CD14-positive monocyte (primary cell): ENCODE measurements at regions of chr2 and their contacts with region 1.

Region 1: DNA sequence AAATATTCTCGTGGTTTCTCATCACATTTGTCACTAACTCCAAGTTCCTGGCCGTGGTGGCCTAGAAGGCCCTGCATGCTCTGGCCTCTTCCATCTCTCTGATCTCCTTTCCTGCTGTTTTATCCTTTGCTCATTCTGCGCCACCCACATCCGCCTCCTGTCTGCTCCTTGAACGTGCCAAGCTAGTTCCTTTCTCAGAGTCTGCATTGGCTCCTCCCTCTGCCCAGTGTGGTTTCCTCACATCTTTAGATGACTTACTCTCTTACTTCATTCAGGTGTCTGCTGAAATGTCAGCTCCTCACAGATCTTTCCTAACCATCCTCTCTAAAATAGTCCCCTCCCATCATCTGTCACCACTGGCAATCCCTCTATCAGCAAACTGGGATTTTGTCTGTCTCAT is 158.6 kb upstream of the RBMS1 start:
- DNase-seq: peak; percentile 81 to 94 (median 88)
- H3K4me3 ChIP-seq: peak overlapping the region in 1 of 3 experiments; percentile 28
- H3K4me3 Mint-ChIP-seq: peak overlapping the region in 1 of 2 donors; percentile 32
- H3K27ac ChIP-seq: peak overlapping the region; percentile 70 to 89
- H3K27ac Mint-ChIP-seq: peak overlapping the region; percentile 82 to 96 (median 87)
- H3K4me1 ChIP-seq: peaks cover 34 to 38% of the 10 kb centered on the region in 2 donors
- H3K4me1 Mint-ChIP-seq: peaks cover 39% of the 10 kb centered on the region
- H3K27me3 ChIP-seq: no peaks in the 10 kb centered on the region
- H3K27me3 Mint-ChIP-seq: peaks cover 0 to 4% (median 0%) of the 10 kb centered on the region in 3 donors
- CTCF ChIP-seq: no peak

Region 2: GRCh38 chr2:160566717-160567116 is 85.5 kb before region 1 on chr2:
- intact Hi-C with region 1: loop called (anchors 5 kb)
- DNase-seq: peak; percentile 80 to 94 (median 83)
- H3K4me3 ChIP-seq: peak overlapping the region in 1 of 3 experiments; percentile 43
- H3K4me3 Mint-ChIP-seq: peak overlapping the region in 1 of 2 donors; percentile 32
- H3K27ac ChIP-seq: peak overlapping the region; percentile 9 to 76
- H3K27ac Mint-ChIP-seq: peak overlapping the region; percentile 81 to 92 (median 91)
- H3K4me1 ChIP-seq: peaks cover 92 to 98% of the 10 kb centered on the region in 2 donors
- H3K4me1 Mint-ChIP-seq: peaks cover 93% of the 10 kb centered on the region
- H3K27me3 ChIP-seq: no peaks in the 10 kb centered on the region
- H3K27me3 Mint-ChIP-seq: peaks cover 0 to 1% (median 0%) of the 10 kb centered on the region in 3 donors
- CTCF ChIP-seq: no peak

Region 3: GRCh38 chr2:160574468-160575142 is 77.6 kb before region 1 on chr2:
- intact Hi-C with region 1: loop called (anchors 5 kb)
- DNase-seq: peak; percentile 50 to 81 (median 57)
- H3K4me3 ChIP-seq: no peak overlapping the region
- H3K4me3 Mint-ChIP-seq: no peak overlapping the region
- H3K27ac ChIP-seq: peak overlapping the region in 1 of 2 donors; percentile 70
- H3K27ac Mint-ChIP-seq: peak overlapping the region in 3 of 7 donors; percentile 20 to 81 (median 61)
- H3K4me1 ChIP-seq: peaks cover 44 to 56% of the 10 kb centered on the region in 2 donors
- H3K4me1 Mint-ChIP-seq: peaks cover 25% of the 10 kb centered on the region
- H3K27me3 ChIP-seq: no peaks in the 10 kb centered on the region
- H3K27me3 Mint-ChIP-seq: peaks cover 0 to 1% (median 0%) of the 10 kb centered on the region in 3 donors
- CTCF ChIP-seq: no peak

Region 4: DNA sequence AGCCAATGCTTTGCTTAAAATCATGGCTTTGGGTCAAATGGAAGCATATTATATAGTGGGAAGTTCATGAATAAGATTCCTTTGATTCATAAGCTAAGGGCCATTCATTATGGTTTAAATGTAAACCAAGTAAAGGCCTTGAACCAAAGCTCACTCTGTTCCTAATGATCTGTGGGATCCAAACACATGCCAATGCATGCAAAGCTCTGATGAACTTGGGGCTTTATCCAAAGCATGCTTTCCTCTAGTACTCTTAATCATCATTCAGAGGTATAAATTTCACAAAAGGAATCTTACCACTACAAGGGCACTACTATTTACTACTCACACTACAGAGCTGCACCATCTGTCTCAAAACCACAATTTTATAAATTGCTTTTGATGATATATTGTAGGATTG is 55.8 kb before region 1 on chr2:
- intact Hi-C with region 1: no loop called
- DNase-seq: no peak
- H3K4me3 ChIP-seq: no peak overlapping the region
- H3K4me3 Mint-ChIP-seq: no peak overlapping the region
- H3K27ac ChIP-seq: no peak overlapping the region
- H3K27ac Mint-ChIP-seq: no peak overlapping the region
- H3K4me1 ChIP-seq: peaks cover 3 to 4% of the 10 kb centered on the region in 2 donors
- H3K4me1 Mint-ChIP-seq: peaks cover 4% of the 10 kb centered on the region
- H3K27me3 ChIP-seq: no peaks in the 10 kb centered on the region
- H3K27me3 Mint-ChIP-seq: peaks cover 0 to under 1% (median 0%) of the 10 kb centered on the region in 3 donors
- CTCF ChIP-seq: no peak

Region 5: GRCh38 chr2:160687629-160688028 is 35.4 kb after region 1 on chr2:
- intact Hi-C with region 1: no loop called
- DNase-seq: no peak
- H3K4me3 ChIP-seq: no peak overlapping the region
- H3K4me3 Mint-ChIP-seq: no peak overlapping the region
- H3K27ac ChIP-seq: no peak overlapping the region
- H3K27ac Mint-ChIP-seq: no peak overlapping the region
- H3K4me1 ChIP-seq: no peaks in the 10 kb centered on the region
- H3K4me1 Mint-ChIP-seq: peaks cover 6% of the 10 kb centered on the region
- H3K27me3 ChIP-seq: no peaks in the 10 kb centered on the region
- H3K27me3 Mint-ChIP-seq: no peaks in the 10 kb centered on the region
- CTCF ChIP-seq: no peak

Region 6: GRCh38 chr2:160703648-160704585 is 51.7 kb after region 1 on chr2:
- intact Hi-C with region 1: loop called (anchors 5 to 10 kb)
- DNase-seq: peak; percentile 61 to 85 (median 70)
- H3K4me3 ChIP-seq: peak overlapping the region in 1 of 3 experiments; percentile 41
- H3K4me3 Mint-ChIP-seq: peak overlapping the region; percentile 38 to 79
- H3K27ac ChIP-seq: peak overlapping the region; percentile 63 to 65
- H3K27ac Mint-ChIP-seq: peak overlapping the region; percentile 76 to 95 (median 90)
- H3K4me1 ChIP-seq: peaks cover 22 to 27% of the 10 kb centered on the region in 2 donors
- H3K4me1 Mint-ChIP-seq: peaks cover 33% of the 10 kb centered on the region
- H3K27me3 ChIP-seq: no peaks in the 10 kb centered on the region
- H3K27me3 Mint-ChIP-seq: peaks cover 0 to 2% (median 0%) of the 10 kb centered on the region in 3 donors
- CTCF ChIP-seq: no peak